Common myeloid progenitor, CD34-positive (primary cell): ENCODE measurements at regions of chr14 and their contacts with region 1.

Region 1: GRCh38 chr14:24080888-24081738 is 9.8 kb downstream of the CPNE6 start:
- DNase-seq: peak; percentile 43 to 84 (median 80)
- H3K4me3 ChIP-seq: peak overlapping the region; percentile 60 to 81 (median 67)
- H3K27ac ChIP-seq: no peak overlapping the region
- H3K4me1 ChIP-seq: peaks cover 7 to 27% (median 26%) of the 10 kb centered on the region in 4 experiments
- H3K27me3 ChIP-seq: peaks cover 0 to 12% (median 7%) of the 10 kb centered on the region in 5 experiments

Region 2: DNA sequence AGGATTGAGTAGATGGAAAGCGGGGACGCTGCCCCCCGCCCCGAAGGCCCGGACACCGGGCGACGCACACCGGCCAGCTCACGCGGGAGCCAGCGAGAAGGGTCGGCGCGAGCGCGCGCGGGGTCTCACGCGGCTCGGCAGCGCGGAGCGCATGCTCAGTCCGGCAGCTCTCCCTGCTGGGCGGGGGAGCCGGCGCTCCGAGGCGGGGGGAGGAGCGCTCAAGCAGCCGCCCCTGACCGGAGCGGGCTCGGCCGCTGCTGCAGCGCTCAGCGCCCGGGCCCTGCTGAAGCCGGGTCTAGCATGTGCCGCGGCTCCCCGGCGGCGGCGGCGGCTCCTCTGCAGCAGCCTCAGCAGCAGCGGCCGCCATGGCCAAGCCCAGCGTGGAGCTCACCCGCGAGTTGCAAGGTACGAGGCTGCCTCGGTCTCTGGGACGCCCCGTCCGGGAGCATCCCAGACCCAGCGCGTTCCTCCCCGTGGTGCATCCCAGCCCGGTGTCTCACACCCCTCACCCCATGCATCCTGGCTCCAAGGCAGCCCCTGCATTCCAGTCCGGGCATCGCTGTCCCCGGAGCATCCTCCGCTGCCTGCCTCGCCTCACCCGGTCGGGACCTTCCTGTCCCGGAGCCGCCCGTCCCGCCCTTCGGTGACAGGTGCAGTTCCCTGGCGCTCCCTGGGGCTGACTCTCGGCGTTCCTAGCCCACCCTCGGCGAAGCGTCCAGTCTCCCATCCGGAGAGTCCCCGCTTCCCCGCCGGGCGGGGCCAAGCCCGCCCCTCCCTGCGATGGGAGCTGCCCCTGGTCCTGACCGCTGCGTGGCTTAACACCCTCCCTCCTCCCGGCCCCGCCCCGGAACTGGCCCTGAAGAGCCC is 29.1 kb before region 1 on chr14 and contains the start of gene CARMIL3:
- CTCF ChIA-PET with region 1: interaction called, 20 read pairs
- POLR2A ChIA-PET with region 1: interaction called, 7 read pairs
- DNase-seq: peak; percentile 40 to 59 (median 51)
- H3K4me3 ChIP-seq: peak within 1 kb of the TSS; percentile 38 to 86 (median 67)
- H3K27ac ChIP-seq: peak within 1 kb of the TSS in 1 of 2 experiments; percentile 54
- H3K4me1 ChIP-seq: peaks cover 0 to 20% (median 17%) of the 10 kb centered on the region in 4 experiments
- H3K27me3 ChIP-seq: peaks cover 0 to 15% (median 9%) of the 10 kb centered on the region in 5 experiments

Region 3: GRCh38 chr14:24351517-24351916 is 270.4 kb after region 1 on chr14:
- CTCF ChIA-PET with region 1: no interaction called
- POLR2A ChIA-PET with region 1: no interaction called
- DNase-seq: peak in 2 of 3 donors; percentile 33 to 47
- H3K4me3 ChIP-seq: no peak overlapping the region
- H3K27ac ChIP-seq: no peak overlapping the region
- H3K4me1 ChIP-seq: no peaks in the 10 kb centered on the region
- H3K27me3 ChIP-seq: peaks cover 0 to 2% (median 0%) of the 10 kb centered on the region in 5 experiments